ENCODE measurements at regions of chr4 and their contacts with region 1.

Region 1: GRCh38 chr4:68271851-68272756 is 26.6 kb upstream of the TMPRSS11B start:
- DNase-seq: no peak
- ATAC-seq: peak; percentile 75 to 83
- H3K4me3 ChIP-seq: no peak overlapping the region
- H3K27ac ChIP-seq: no peak overlapping the region
- H3K4me1 ChIP-seq: no peaks in the 10 kb centered on the region
- H3K27me3 ChIP-seq: peaks cover 6% of the 10 kb centered on the region
- CTCF ChIP-seq: peak; percentile 78

Region 2: DNA sequence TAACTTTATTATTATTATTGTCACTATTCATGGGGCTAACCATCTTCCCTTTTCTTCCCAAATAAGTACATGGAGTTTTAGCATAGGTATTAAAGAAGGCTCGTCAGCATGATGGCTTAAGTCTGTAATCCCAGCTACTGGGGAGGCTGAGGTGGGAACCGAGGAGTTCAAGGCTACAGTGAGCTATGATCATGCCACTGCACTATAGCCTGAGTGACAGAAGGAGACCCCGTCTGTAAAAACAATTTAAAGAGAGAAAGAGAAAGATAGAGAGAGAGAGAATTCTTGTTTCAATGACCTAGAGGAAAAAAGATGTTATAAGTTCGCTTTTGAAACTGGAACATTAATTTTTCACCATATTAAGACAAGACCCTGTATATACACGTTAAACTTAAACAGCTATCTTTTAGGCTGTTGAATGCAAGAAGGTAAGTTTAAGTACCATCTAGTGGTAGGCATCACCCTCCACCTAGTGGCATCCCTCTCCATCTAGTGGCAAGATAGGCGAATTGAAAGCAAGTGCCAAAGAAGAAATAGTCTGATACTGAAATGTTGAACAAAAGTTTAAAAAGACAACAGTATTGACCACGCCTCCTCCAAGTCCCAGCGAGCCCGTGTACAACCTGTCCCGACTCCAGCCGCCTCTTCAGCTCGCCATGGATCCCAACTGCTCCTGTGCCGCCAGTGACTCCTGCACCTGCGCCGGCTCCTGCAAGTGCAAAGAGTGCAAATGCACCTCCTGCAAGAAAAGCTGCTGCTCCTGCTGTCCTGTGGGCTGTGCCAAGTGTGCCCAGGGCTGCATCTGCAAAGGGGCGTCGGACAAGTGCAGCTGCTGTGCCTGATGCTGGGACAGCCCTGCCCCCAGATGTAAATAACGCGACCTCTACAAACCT is 103.8 kb after region 1 on chr4:
- intact Hi-C with region 1: loop called (anchors 10 kb)
- DNase-seq: peak; percentile 49
- ATAC-seq: peak; percentile 84 to 86
- H3K4me3 ChIP-seq: peak overlapping the region; percentile 17
- H3K27ac ChIP-seq: no peak overlapping the region
- H3K4me1 ChIP-seq: peaks cover 7% of the 10 kb centered on the region
- H3K27me3 ChIP-seq: no peaks in the 10 kb centered on the region
- CTCF ChIP-seq: peak; percentile 75

Measured in lower lobe of right lung (tissue), 2 donors.